Sciatic nerve (tissue), 2 donors: ENCODE measurements at regions of chr4 and their contacts with region 1.

Region 1: GRCh38 chr4:98658287-98659105 is at the start of gene TSPAN5:
- DNase-seq: peak; percentile 87
- ATAC-seq: peak; percentile 91
- total RNA-seq, gene TSPAN5: 19.1 TPM

Region 2: DNA sequence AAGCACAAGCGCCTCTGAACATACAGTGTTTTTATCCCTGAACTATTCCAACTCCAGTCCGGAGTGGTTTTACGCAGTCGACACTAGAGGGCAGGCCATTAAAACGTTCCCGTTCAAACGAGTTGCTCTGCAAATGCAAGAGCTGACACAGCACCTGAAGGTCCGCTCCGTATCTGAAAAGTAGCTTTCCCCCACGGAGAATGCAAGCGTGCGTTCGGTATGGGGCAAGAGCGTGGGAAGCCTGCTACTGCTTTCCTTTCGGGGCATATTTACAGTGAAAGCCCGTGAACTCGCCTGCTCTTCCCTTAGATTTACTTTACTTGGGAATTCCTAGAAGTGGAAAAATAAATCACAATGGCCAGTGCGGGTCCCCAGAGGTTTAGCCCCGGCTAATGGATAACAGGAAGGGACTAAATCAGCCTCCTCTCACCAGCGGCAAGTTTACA is 190.8 kb before region 1 on chr4:
- intact Hi-C with region 1: loop called (anchors 10 kb)
- DNase-seq: peak; percentile 82
- ATAC-seq: peak; percentile 93

Region 3: GRCh38 chr4:98642991-98643426 is 15.5 kb before region 1 on chr4:
- intact Hi-C with region 1: loop called (anchors 1 kb)
- DNase-seq: no peak
- ATAC-seq: no peak